ENCODE measurements at regions of chr10 and their contacts with region 1.

Region 1: GRCh38 chr10:69253171-69253570 is 25.1 kb upstream of the HK1 start:
- DNase-seq: no peak
- ATAC-seq: no peak
- H3K4me3 Mint-ChIP-seq: no peak overlapping the region
- H3K27ac Mint-ChIP-seq: no peak overlapping the region
- H3K4me1 Mint-ChIP-seq: no peaks in the 10 kb centered on the region
- H3K27me3 Mint-ChIP-seq: no peaks in the 10 kb centered on the region

Region 2: DNA sequence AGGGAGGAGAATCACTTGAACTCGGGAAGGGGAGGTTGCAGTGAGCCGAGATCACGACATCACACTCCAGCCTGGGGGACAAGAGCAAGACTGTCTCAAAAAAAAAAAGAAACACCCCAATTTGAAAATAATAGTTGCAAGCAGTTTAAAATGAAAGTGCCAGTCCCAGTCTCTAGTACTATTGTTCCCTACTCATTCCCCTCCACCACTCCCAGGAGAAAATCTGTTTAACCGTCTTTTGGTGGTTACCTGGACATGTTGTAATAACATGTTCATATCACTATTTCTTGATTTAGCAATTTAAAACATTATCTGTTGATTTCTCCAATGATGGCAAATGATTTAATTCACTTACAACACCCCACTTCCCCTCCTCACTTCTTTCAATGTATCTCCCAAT is 219.9 kb before region 1 on chr10:
- CTCF ChIA-PET with region 1: no interaction called
- POLR2A ChIA-PET with region 1: no interaction called
- intact Hi-C with region 1: no loop called
- DNase-seq: no peak
- ATAC-seq: no peak
- H3K4me3 Mint-ChIP-seq: no peak overlapping the region
- H3K27ac Mint-ChIP-seq: no peak overlapping the region
- H3K4me1 Mint-ChIP-seq: peaks cover 2% of the 10 kb centered on the region
- H3K27me3 Mint-ChIP-seq: no peaks in the 10 kb centered on the region

Region 3: DNA sequence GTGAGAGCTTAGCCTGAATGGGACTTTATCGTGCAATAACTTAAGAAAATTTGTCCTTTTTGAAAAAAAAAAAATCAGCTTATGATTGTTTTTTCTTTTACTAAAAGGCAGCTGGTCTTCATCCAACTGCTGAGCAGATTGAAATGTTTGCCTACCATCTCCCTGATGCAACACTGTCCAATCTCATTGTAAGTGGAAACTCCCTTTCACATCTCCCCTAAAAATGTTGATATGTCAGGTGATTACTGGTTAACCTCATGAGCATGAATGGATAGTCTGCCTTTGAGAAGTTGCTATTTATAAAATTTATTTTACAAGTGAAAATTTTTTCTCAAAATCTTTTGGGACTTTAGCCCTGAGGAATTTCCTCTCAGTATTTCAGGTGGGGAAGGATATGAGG is 50.8 kb before region 1 on chr10:
- CTCF ChIA-PET with region 1: no interaction called
- POLR2A ChIA-PET with region 1: interaction called, 12 read pairs
- intact Hi-C with region 1: no loop called
- DNase-seq: no peak
- ATAC-seq: peak; percentile 38
- H3K4me3 Mint-ChIP-seq: no peak overlapping the region
- H3K27ac Mint-ChIP-seq: no peak overlapping the region
- H3K4me1 Mint-ChIP-seq: peaks cover 5% of the 10 kb centered on the region
- H3K27me3 Mint-ChIP-seq: no peaks in the 10 kb centered on the region

Measured in activated CD4-positive, alpha-beta T cell treated with anti-CD3 and anti-CD28 coated beads for 36 hours (primary cell).